ENCODE measurements at regions of chr15 and their contacts with region 1.

Region 1: GRCh38 chr15:52427804-52428203 is 100.9 kb downstream of the MYO5A start:
- DNase-seq: no peak
- H3K4me3 ChIP-seq: no peak overlapping the region
- H3K27ac ChIP-seq: no peak overlapping the region
- H3K4me1 ChIP-seq: peaks cover 6% of the 10 kb centered on the region
- H3K27me3 ChIP-seq: no peaks in the 10 kb centered on the region
- CTCF ChIP-seq: no peak
- POLR2A ChIP-seq: no peak

Region 2: GRCh38 chr15:52379395-52380106 is 48.3 kb before region 1 on chr15:
- CTCF ChIA-PET with region 1: no interaction called
- POLR2A ChIA-PET with region 1: no interaction called
- dilution Hi-C with region 1: no loop called
- intact Hi-C with region 1: no loop called
- DNase-seq: no peak
- H3K4me3 ChIP-seq: no peak overlapping the region
- H3K27ac ChIP-seq: no peak overlapping the region
- H3K4me1 ChIP-seq: peaks cover 16% of the 10 kb centered on the region
- H3K27me3 ChIP-seq: no peaks in the 10 kb centered on the region
- CTCF ChIP-seq: no peak
- POLR2A ChIP-seq: no peak

Region 3: DNA sequence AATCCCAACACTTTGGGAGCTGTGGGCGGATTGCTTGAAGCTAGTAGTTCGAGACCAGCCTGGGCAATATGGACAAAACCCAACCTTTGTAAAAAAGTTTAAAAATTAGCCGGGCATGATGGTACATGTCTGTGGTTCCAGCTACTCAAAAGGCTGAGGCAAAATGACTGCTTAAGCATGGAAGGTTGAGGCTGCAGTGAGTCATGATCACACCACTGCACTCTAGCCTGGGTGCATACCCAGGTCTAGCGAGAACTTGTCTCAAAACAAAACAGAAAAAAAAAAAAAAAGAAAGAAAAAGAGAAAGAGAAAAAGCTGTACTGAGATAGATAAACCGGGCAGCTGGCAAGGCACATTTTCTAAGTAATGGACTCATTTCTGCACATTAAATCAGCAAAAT is 130.4 kb after region 1 on chr15:
- CTCF ChIA-PET with region 1: no interaction called
- POLR2A ChIA-PET with region 1: interaction called, 10 read pairs
- dilution Hi-C with region 1: no loop called
- intact Hi-C with region 1: no loop called
- DNase-seq: peak; percentile 43
- H3K4me3 ChIP-seq: no peak overlapping the region
- H3K27ac ChIP-seq: peak overlapping the region; percentile 46
- H3K4me1 ChIP-seq: peaks cover 2% of the 10 kb centered on the region
- H3K27me3 ChIP-seq: no peaks in the 10 kb centered on the region
- CTCF ChIP-seq: no peak
- POLR2A ChIP-seq: no peak

Region 4: GRCh38 chr15:52679232-52680040 is 251.6 kb after region 1 on chr15 and contains the start of gene ATOSA:
- CTCF ChIA-PET with region 1: no interaction called
- POLR2A ChIA-PET with region 1: no interaction called
- dilution Hi-C with region 1: no loop called
- intact Hi-C with region 1: no loop called
- DNase-seq: peak; percentile 90
- H3K4me3 ChIP-seq: peak within 1 kb of the TSS; percentile 59 to 87 (median 80)
- H3K27ac ChIP-seq: peak within 1 kb of the TSS; percentile 92
- H3K4me1 ChIP-seq: peaks cover 18% of the 10 kb centered on the region
- H3K27me3 ChIP-seq: peaks cover 11 to 17% of the 10 kb centered on the region in 2 experiments
- CTCF ChIP-seq: no peak
- POLR2A ChIP-seq: no peak
- total RNA-seq, gene ATOSA: 39.1 and 41.1 TPM in 2 replicates